AG04450 (cell line): ENCODE measurements at regions of chr10 and their contacts with region 1.

Region 1: GRCh38 chr10:11757821-11758463 is 15.8 kb downstream of the ECHDC3 start:
- DNase-seq: peak; percentile 43
- H3K4me3 ChIP-seq: no peak overlapping the region
- H3K27ac ChIP-seq: peak overlapping the region; percentile 21
- H3K27me3 ChIP-seq: peaks cover 3% of the 10 kb centered on the region
- CTCF ChIP-seq: peak; percentile 96

Region 2: DNA sequence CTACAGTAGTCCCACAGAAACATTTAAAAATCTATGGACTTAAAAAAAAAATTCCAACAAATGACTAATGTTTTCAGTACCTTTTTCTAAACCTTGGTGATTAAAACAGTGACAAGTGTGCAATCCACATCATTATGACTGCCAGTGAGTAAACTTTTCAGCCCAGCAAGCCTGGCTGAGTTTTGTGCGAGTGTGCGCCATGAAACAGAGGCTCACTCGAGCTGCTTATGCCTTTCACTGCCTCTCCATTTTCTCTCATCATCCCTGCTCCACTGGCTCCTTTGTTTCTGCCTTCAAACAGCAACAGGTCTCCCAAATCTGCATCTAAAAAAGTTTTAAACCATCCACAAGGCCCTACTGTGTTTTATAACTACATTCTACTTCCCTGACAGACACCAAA is 252.3 kb before region 1 on chr10:
- CTCF ChIA-PET with region 1: interaction called, 10 read pairs
- POLR2A ChIA-PET with region 1: no interaction called
- DNase-seq: no peak
- H3K4me3 ChIP-seq: no peak overlapping the region
- H3K27ac ChIP-seq: no peak overlapping the region
- H3K27me3 ChIP-seq: no peaks in the 10 kb centered on the region
- CTCF ChIP-seq: no peak

Region 3: DNA sequence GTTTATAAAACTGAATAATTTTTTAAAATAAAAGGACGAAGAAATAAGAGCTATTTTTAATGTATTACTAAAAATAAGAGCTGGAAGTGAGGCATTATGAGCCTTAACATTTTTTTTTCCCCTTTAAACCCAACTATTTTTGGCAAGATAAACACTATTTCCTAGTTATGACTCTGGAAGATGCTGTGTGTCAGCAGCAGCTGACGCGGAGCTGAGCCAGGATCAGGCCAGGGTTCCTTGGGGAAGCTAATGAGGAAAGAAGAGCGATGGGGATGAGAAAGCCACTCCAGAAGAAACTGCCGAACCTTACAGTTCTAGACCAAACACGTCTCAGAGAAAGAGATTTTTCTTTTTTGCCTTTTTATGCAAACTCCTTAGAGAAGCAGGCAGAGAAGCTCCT is 232.4 kb before region 1 on chr10:
- CTCF ChIA-PET with region 1: interaction called, 29 read pairs
- POLR2A ChIA-PET with region 1: no interaction called
- DNase-seq: no peak
- H3K4me3 ChIP-seq: no peak overlapping the region
- H3K27ac ChIP-seq: no peak overlapping the region
- H3K27me3 ChIP-seq: no peaks in the 10 kb centered on the region
- CTCF ChIP-seq: no peak

Region 4: GRCh38 chr10:11746883-11747539 is 10.9 kb before region 1 on chr10:
- CTCF ChIA-PET with region 1: interaction called, 19 read pairs
- POLR2A ChIA-PET with region 1: no interaction called
- DNase-seq: no peak
- H3K4me3 ChIP-seq: no peak overlapping the region
- H3K27ac ChIP-seq: no peak overlapping the region
- H3K27me3 ChIP-seq: peaks cover 5% of the 10 kb centered on the region
- CTCF ChIP-seq: no peak

Region 5: DNA sequence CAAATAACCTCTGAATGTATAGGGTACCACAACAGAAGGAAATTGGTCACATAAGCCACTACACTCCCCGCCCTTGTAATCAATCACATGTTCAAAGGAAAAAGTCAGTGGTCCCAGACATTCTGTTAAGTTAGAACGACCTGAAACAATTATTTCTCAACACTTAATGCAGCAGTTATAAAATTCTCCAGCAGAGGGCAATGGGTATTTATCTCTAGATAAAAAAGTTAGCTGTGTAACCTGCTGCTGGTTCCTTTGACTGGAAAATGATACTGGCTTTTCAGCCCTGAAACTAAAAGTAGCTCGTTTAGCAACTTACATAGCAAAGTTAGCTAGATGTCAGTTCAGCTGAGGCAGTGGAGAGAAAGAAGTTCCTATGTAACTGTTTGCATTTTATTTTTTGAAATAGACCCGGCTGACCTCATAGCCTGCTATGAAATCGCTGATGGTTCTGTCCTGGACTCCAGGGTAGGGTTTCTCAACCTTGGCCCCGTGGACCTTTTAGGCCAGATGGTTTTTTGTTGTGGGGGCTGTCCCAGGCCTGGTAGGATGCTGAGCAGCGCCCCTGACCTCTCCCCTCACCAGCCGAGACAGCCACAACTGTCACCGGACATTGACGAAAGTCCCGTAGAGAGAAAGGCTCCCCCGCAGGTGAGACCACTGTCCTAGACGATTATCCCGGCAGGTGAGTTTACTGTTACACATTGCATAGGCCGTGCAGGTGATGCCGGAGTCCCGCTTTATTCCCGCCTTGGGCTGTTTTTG is 25.0 kb after region 1 on chr10:
- CTCF ChIA-PET with region 1: interaction called, 16 read pairs
- POLR2A ChIA-PET with region 1: no interaction called
- DNase-seq: peak; percentile 32
- H3K4me3 ChIP-seq: no peak overlapping the region
- H3K27ac ChIP-seq: no peak overlapping the region
- H3K27me3 ChIP-seq: peaks cover 5% of the 10 kb centered on the region
- CTCF ChIP-seq: peak; percentile 80